ENCODE measurements at regions of chr1 and their contacts with region 1.

Region 1: GRCh38 chr1:67685067-67685557 is at the start of gene GADD45A:
- DNase-seq: peak; percentile 97
- ATAC-seq: peak; percentile 85
- H3K4me3 Mint-ChIP-seq: peak within 1 kb of the TSS; percentile 90
- H3K27ac Mint-ChIP-seq: peak within 1 kb of the TSS; percentile 97
- H3K4me1 Mint-ChIP-seq: peaks cover 49% of the 10 kb centered on the region
- H3K27me3 Mint-ChIP-seq: no peaks in the 10 kb centered on the region
- CTCF ChIP-seq: no peak
- total RNA-seq, gene GADD45A: 33.5 to 34.3 TPM

Region 2: GRCh38 chr1:67618285-67619018 is 66.7 kb before region 1 on chr1:
- CTCF ChIA-PET with region 1: no interaction called
- POLR2A ChIA-PET with region 1: no interaction called
- intact Hi-C with region 1: no loop called
- DNase-seq: no peak
- ATAC-seq: no peak
- H3K4me3 Mint-ChIP-seq: no peak overlapping the region
- H3K27ac Mint-ChIP-seq: no peak overlapping the region
- H3K4me1 Mint-ChIP-seq: no peaks in the 10 kb centered on the region
- H3K27me3 Mint-ChIP-seq: peaks cover 21% of the 10 kb centered on the region
- CTCF ChIP-seq: no peak

Region 3: DNA sequence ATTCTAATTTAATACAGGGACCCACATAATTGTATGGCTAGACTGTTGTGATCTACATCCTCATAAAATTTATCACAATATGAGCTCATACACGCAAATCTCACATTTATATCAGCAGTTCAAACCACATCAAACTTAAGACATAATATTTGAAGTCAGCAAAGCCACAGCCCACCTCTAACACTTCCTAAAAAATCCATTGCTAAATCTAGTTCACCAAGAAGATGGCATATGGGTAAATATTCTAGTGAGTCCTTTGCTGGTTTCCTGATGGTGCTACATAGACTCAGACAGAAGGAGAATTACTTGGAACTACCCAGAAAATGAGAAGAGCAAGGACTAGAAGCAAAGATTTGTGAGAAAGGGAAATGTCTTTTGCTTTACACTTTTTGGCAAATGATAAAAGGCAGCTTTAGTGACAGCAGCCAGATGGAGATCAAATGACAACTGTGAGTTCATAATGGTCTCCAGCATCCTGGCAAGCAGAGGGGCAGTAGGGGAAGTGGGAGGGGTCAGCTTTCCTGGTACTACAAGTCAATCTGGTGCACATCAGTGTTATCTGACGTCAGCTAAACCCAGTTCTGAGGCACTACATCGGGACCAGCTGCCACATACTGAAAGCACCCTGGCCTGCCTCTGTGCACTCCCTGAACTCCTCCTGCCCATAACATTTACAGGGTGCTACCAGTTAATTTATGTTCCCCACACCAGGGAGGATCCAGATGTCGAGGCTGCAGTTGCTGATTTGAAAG is 10.7 kb before region 1 on chr1:
- CTCF ChIA-PET with region 1: interaction called, 16 read pairs
- POLR2A ChIA-PET with region 1: interaction called, 33 read pairs
- intact Hi-C with region 1: no loop called
- DNase-seq: peak; percentile 80
- ATAC-seq: peak; percentile 96
- H3K4me3 Mint-ChIP-seq: peak overlapping the region; percentile 20
- H3K27ac Mint-ChIP-seq: peak overlapping the region; percentile 78
- H3K4me1 Mint-ChIP-seq: peaks cover 19% of the 10 kb centered on the region
- H3K27me3 Mint-ChIP-seq: peaks cover 10% of the 10 kb centered on the region
- CTCF ChIP-seq: no peak

Region 4: DNA sequence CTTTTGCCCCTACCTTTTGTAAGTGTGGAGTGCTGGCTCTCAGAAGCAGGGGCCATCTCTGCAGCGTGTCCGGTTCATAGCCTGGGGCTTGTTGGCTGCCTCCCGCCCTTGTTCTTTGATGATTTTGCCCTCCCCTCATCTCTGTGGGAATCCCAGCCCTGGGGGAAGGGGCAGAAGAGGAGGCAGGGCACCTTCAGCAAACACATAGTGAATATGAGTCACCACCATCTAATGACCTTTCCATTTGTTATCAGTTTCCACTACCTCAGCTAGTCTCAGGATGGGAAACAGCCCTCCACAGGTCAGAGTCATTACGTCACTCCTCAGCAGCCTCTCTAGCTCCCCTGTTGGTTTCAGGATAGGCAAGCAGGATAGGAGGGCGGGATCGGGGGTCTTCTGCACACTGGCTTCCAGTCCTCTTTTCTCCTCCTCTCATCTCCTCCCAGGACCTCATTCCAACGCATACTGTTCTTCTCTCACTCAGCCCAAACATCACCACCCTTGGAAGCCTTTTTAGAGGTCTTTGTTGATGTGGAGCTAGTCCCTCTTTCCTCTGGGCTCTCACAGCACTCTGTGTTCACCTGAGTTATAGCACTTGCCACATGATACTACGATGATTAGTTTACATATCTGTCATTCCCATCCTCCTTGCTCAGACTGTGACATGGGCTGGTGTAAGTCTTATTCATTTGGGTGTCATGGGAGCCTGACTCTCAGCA is 15.7 kb after region 1 on chr1:
- CTCF ChIA-PET with region 1: interaction called, 5 read pairs
- POLR2A ChIA-PET with region 1: interaction called, 23 read pairs
- intact Hi-C with region 1: no loop called
- DNase-seq: peak; percentile 71
- ATAC-seq: peak; percentile 96
- H3K4me3 Mint-ChIP-seq: no peak overlapping the region
- H3K27ac Mint-ChIP-seq: peak overlapping the region; percentile 70
- H3K4me1 Mint-ChIP-seq: peaks cover 18% of the 10 kb centered on the region
- H3K27me3 Mint-ChIP-seq: no peaks in the 10 kb centered on the region
- CTCF ChIP-seq: peak; percentile 60

Region 5: GRCh38 chr1:67735806-67736627 is 50.9 kb after region 1 on chr1:
- CTCF ChIA-PET with region 1: interaction called, 5 read pairs
- POLR2A ChIA-PET with region 1: interaction called, 3 read pairs
- intact Hi-C with region 1: loop called (anchors 5 kb)
- DNase-seq: peak; percentile 79
- ATAC-seq: peak; percentile 99
- H3K4me3 Mint-ChIP-seq: peak overlapping the region; percentile 54
- H3K27ac Mint-ChIP-seq: peak overlapping the region; percentile 76
- H3K4me1 Mint-ChIP-seq: peaks cover 21% of the 10 kb centered on the region
- H3K27me3 Mint-ChIP-seq: no peaks in the 10 kb centered on the region
- CTCF ChIP-seq: no peak

Measured in activated CD8-positive, alpha-beta T cell treated with anti-CD3 and anti-CD28 coated beads for 36 hours (primary cell).